Activated CD8-positive, alpha-beta T cell treated with anti-CD3 and anti-CD28 coated beads for 36 hours (primary cell): ENCODE measurements at regions of chr18 and their contacts with region 1.

Region 1: GRCh38 chr18:24488824-24489493 is 28.5 kb downstream of the HRH4 start:
- DNase-seq: no peak
- ATAC-seq: peak; percentile 65
- H3K4me3 Mint-ChIP-seq: no peak overlapping the region
- H3K27ac Mint-ChIP-seq: no peak overlapping the region
- H3K4me1 Mint-ChIP-seq: peaks cover 14% of the 10 kb centered on the region
- H3K27me3 Mint-ChIP-seq: peaks cover 13% of the 10 kb centered on the region
- CTCF ChIP-seq: peak; percentile 81

Region 2: DNA sequence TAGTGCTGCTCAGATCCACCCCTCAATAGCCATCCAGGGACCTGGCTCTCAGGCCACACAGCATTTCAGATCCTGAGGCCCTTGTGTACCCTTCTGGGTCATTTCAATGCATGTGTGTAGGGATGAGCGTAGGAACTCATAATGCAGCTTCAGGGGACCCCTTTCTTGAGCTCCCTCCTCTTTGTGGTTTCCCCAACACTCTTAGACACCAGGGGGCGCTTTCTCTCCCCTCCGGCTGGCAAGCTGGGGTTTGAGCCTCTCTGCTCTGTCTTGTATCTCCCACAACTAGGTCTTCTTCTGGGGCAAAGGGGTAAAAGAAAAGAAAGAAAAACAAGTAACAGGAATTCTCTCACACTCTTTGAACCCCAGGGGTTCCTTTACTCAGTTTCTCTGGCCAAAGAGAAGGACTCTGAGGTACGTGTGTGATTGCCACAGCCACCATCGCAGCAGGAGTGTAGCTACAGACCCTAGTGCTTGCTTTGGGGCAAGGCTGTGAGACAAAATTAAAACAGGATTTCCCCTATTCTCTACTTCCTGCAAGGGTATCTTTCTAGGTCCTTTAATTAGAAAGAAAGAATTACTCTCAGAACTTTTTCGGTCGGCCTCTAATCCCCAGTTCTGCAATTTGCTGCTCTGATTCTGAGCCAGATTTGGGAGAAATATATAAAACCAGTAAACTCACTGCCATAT is 312.1 kb before region 1 on chr18:
- CTCF ChIA-PET with region 1: interaction called, 32 read pairs
- POLR2A ChIA-PET with region 1: no interaction called
- intact Hi-C with region 1: loop called (anchors 10 kb)
- DNase-seq: peak; percentile 73
- ATAC-seq: peak; percentile 47
- H3K4me3 Mint-ChIP-seq: no peak overlapping the region
- H3K27ac Mint-ChIP-seq: no peak overlapping the region
- H3K4me1 Mint-ChIP-seq: no peaks in the 10 kb centered on the region
- H3K27me3 Mint-ChIP-seq: no peaks in the 10 kb centered on the region
- CTCF ChIP-seq: peak; percentile 70

Region 3: DNA sequence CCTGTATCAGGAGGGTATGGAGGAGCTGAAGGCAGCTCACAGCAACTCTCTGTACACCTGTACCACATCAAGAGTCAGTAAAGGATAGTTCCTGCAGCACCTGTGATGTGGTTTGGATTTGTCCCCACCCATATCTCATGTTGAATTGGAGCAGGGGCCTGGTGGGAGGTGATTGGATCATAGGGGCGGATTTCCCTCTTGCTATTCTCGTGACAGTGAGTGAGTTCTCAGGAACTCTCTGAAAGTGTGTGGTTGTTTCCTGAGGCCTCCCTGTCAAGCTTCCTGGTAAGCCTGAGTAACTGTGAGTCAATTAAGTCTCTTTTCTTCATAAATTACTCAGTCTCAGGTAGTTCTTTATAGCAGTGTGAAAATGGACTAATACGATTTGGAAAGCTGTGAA is 120.2 kb before region 1 on chr18:
- CTCF ChIA-PET with region 1: interaction called, 192 read pairs
- POLR2A ChIA-PET with region 1: no interaction called
- intact Hi-C with region 1: no loop called
- DNase-seq: peak; percentile 40
- ATAC-seq: peak; percentile 73
- H3K4me3 Mint-ChIP-seq: no peak overlapping the region
- H3K27ac Mint-ChIP-seq: peak overlapping the region; percentile 1
- H3K4me1 Mint-ChIP-seq: peaks cover 21% of the 10 kb centered on the region
- H3K27me3 Mint-ChIP-seq: no peaks in the 10 kb centered on the region
- CTCF ChIP-seq: no peak

Region 4: GRCh38 chr18:24436939-24437338 is 52.0 kb before region 1 on chr18:
- CTCF ChIA-PET with region 1: interaction called, 11 read pairs
- POLR2A ChIA-PET with region 1: no interaction called
- intact Hi-C with region 1: no loop called
- DNase-seq: no peak
- ATAC-seq: no peak
- H3K4me3 Mint-ChIP-seq: no peak overlapping the region
- H3K27ac Mint-ChIP-seq: no peak overlapping the region
- H3K4me1 Mint-ChIP-seq: peaks cover 6% of the 10 kb centered on the region
- H3K27me3 Mint-ChIP-seq: no peaks in the 10 kb centered on the region
- CTCF ChIP-seq: no peak

Region 5: DNA sequence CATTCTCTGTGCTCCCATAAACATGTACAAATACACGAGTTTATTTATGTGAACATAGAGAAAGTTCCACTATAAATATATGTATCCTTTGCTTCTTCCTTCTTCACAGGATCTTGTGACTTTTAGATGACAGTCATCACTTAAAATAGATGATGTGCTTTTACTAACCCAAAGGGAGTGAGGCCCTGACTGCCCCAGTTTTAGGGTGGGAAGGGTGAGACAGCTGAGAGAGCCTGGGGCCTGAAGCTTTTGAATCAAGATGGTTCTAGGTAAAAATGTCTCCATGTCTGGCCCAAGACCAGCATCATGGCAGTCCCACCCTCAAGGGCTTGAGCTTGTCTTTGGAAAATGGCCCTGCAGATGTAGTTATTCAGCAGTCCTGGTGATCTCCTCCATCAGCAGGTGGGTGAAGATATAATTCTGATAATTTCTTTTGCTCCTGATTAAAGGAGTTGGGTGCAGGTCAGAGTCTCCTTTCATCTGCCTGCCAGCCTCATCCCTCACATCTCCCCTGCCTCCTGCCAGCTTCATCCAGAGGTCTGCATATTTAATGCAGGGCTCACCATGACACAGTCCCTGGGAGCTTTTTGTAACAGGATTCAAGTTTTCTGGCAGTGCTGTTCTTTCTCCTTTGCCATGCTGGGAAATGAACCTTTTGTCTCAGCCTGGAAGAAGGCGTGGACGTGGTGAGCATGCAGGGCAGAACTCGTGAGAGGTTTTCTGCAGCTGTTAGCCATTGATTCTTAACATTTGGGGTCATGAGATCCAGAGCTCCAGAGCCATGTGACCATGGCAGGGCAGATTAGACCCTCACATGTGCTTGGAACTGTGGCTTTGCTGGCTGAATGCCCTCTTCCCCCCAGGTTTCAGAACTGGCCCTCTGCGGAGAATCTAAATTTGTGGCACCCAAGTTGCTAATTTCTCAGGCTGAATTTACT is 25.9 kb before region 1 on chr18:
- CTCF ChIA-PET with region 1: interaction called, 19 read pairs
- POLR2A ChIA-PET with region 1: no interaction called
- intact Hi-C with region 1: no loop called
- DNase-seq: no peak
- ATAC-seq: no peak
- H3K4me3 Mint-ChIP-seq: no peak overlapping the region
- H3K27ac Mint-ChIP-seq: no peak overlapping the region
- H3K4me1 Mint-ChIP-seq: no peaks in the 10 kb centered on the region
- H3K27me3 Mint-ChIP-seq: peaks cover 3% of the 10 kb centered on the region
- CTCF ChIP-seq: no peak

Region 6: GRCh38 chr18:24475926-24476589 is 12.9 kb before region 1 on chr18:
- CTCF ChIA-PET with region 1: interaction called, 13 read pairs
- POLR2A ChIA-PET with region 1: interaction called, 3 read pairs
- intact Hi-C with region 1: no loop called
- DNase-seq: no peak
- ATAC-seq: no peak
- H3K4me3 Mint-ChIP-seq: no peak overlapping the region
- H3K27ac Mint-ChIP-seq: no peak overlapping the region
- H3K4me1 Mint-ChIP-seq: no peaks in the 10 kb centered on the region
- H3K27me3 Mint-ChIP-seq: peaks cover 4% of the 10 kb centered on the region
- CTCF ChIP-seq: no peak

Region 7: DNA sequence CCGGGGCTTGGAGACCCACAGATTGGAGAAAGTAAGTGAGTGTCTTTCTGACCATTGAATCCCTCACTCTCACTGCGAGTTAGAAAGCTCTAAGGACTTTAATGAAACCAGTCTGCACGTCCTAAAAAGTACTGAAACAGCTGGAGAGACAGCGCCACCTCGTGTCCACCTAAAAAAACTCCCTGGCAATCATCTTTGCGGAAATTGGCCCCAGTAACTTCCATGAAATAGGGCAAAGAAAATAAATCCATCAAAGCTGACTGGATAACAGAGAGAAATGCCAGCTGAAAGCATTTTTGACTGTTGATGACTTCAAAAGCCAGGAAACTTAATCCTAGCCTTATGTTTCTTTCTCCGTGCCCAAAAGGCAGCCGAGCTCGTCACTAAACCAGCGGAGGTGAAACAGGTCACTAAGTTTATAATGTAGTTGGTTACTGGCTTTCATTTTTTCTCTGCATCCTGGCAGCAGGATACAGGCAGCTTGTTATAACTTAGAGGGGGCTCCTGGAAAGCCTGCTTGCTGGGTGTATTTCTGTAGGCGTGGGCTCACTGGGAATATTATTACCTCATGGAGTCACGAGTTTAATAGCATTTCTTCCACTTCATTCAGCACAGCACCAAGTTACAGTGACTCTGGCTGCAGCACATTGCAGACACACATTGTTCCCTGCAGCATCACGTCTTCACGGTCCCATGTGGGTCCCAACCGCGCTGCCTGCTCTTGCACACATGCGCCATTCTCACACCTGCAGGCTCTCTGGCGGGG is 238.0 kb after region 1 on chr18:
- CTCF ChIA-PET with region 1: interaction called, 31 read pairs
- POLR2A ChIA-PET with region 1: no interaction called
- intact Hi-C with region 1: loop called (anchors 10 kb)
- DNase-seq: peak; percentile 69
- ATAC-seq: no peak
- H3K4me3 Mint-ChIP-seq: no peak overlapping the region
- H3K27ac Mint-ChIP-seq: no peak overlapping the region
- H3K4me1 Mint-ChIP-seq: no peaks in the 10 kb centered on the region
- H3K27me3 Mint-ChIP-seq: peaks cover 8% of the 10 kb centered on the region
- CTCF ChIP-seq: peak; percentile 84